Endothelial cell of umbilical vein (primary cell): ENCODE measurements at regions of chr11 and their contacts with region 1.

Region 1: DNA sequence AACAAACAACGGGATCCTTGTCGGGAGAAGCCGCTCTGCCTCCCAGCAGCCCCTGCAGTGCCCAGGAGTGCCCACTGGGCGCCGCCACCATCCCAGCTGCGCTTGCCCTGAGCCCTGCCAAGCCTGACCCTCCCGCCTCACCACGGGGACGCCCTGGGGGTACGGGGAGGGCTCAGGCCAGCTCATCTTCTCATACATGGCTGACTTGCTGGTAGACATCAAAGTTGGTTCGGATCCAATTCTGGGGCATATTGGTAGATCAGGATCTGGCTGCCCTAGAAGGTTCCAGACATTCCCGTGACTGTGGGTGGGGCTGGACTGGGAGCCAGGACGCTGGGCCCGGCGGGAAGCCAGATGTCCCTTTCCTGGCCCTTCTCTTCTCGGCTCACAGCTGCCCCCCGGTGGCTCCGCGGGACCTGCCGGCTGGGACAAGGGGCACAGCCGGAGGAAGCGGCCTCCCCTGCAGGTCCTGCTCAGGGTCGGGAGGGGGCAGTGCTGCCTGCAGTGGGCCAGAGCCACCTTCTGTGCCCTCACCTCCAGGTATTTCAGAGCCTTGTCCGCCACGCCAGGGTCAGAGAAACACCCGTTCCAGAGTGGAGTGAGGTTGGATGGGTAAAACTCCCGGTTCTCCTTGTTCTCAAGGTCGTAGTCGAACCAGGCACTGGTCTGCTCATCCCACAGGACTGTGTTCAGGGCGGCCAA is 10.6 kb upstream of the TREH start:
- DNase-seq: peak; percentile 90
- H3K4me3 ChIP-seq: peak overlapping the region in 2 of 3 experiments; percentile 22 to 34
- H3K27ac ChIP-seq: peak overlapping the region; percentile 48
- H3K4me1 ChIP-seq: no peaks in the 10 kb centered on the region
- H3K27me3 ChIP-seq: peaks cover 0 to 3% of the 10 kb centered on the region in 2 experiments
- CTCF ChIP-seq: peak; percentile 91 to 97
- POLR2A ChIP-seq: peak; percentile 58

Region 2: GRCh38 chr11:118592616-118593367 is 97.2 kb before region 1 on chr11:
- CTCF ChIA-PET with region 1: interaction called, 9 read pairs
- POLR2A ChIA-PET with region 1: no interaction called
- dilution Hi-C with region 1: no loop called
- intact Hi-C with region 1: loop called (anchors 1 kb)
- DNase-seq: no peak
- H3K4me3 ChIP-seq: no peak overlapping the region
- H3K27ac ChIP-seq: no peak overlapping the region
- H3K4me1 ChIP-seq: no peaks in the 10 kb centered on the region
- H3K27me3 ChIP-seq: no peaks in the 10 kb centered on the region
- CTCF ChIP-seq: no peak
- POLR2A ChIP-seq: no peak

Region 3: DNA sequence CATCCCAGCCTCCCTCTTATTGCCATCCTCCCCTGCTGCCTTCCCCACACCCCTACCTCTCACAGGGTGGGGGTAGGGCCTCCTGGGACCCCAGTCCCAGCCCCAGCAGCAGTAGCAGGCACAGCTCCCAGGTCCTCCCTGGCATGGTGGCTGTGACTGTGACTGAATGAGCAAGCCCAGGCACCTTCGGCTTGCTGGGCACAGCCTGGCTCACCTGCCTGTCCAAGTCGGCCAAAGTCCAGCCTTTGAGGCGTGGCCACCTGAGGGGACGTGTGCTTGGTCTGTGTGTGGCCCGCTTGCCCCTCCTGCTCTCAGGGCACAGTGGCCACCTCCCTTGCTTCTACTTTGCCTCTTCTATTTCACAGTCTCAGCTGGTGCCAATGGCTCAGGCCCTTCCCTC is 10.5 kb before region 1 on chr11 and contains the start of gene TREH:
- CTCF ChIA-PET with region 1: interaction called, 16 read pairs
- POLR2A ChIA-PET with region 1: no interaction called
- dilution Hi-C with region 1: no loop called
- intact Hi-C with region 1: no loop called
- DNase-seq: no peak
- H3K4me3 ChIP-seq: no peak within 1 kb of the TSS
- H3K27ac ChIP-seq: no peak within 1 kb of the TSS
- H3K4me1 ChIP-seq: no peaks in the 10 kb centered on the region
- H3K27me3 ChIP-seq: peaks cover 0 to under 1% of the 10 kb centered on the region in 2 experiments
- CTCF ChIP-seq: no peak
- POLR2A ChIP-seq: no peak
- total RNA-seq, gene TREH: not detected in 2 replicates

Region 4: DNA sequence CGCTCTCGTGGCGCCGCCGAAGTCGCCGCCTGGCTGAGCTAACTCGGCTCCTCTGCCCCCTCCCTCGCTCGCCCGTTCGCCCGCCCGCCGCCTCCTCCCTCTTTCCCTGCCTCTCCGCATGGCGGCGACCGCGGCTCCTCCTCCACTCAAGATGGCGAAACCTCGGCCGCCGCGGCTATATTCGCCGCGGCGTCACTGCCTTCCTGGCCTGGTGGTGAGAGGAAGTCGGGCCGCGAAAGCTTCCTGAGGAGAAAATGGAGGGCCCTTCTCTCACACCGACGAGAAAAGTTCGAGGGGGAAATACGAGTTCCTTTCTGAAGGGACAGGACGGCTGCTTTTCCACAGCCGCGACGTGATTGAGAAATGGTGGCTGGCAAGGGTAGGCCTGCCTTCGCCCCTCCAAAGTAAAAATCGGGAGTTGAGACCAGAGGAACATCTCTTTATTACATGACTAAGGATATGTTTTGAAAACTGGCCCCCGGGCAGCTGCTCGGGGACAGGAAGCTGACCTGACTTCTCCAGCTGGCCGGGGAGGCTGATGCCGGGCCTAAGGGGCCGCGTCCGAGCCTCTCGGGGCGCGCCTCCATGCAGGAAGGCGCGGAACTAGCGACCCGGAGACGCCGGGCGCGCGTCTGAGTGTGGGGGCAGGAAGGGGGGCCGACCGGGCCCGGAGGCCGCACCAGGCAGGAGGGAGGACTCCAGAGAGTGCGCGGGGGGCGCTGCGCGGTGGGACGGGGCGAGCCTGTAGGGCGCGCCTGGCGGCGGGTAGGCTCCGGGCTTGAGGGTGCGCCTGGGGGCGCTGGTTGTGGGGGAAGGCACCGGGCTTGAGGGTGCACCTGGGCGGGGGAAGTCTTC is 101.3 kb after region 1 on chr11 and contains the start of gene DDX6:
- CTCF ChIA-PET with region 1: interaction called, 11 read pairs
- POLR2A ChIA-PET with region 1: interaction called, 3 read pairs
- dilution Hi-C with region 1: no loop called
- intact Hi-C with region 1: no loop called
- DNase-seq: peak; percentile 86
- H3K4me3 ChIP-seq: peak within 1 kb of the TSS; percentile 70 to 87 (median 84)
- H3K27ac ChIP-seq: peak within 1 kb of the TSS; percentile 89
- H3K4me1 ChIP-seq: peaks cover 21% of the 10 kb centered on the region
- H3K27me3 ChIP-seq: no peaks in the 10 kb centered on the region
- CTCF ChIP-seq: peak; percentile 7 to 38
- POLR2A ChIP-seq: no peak
- total RNA-seq, gene DDX6: 132 and 138 TPM in 2 replicates

Region 5: DNA sequence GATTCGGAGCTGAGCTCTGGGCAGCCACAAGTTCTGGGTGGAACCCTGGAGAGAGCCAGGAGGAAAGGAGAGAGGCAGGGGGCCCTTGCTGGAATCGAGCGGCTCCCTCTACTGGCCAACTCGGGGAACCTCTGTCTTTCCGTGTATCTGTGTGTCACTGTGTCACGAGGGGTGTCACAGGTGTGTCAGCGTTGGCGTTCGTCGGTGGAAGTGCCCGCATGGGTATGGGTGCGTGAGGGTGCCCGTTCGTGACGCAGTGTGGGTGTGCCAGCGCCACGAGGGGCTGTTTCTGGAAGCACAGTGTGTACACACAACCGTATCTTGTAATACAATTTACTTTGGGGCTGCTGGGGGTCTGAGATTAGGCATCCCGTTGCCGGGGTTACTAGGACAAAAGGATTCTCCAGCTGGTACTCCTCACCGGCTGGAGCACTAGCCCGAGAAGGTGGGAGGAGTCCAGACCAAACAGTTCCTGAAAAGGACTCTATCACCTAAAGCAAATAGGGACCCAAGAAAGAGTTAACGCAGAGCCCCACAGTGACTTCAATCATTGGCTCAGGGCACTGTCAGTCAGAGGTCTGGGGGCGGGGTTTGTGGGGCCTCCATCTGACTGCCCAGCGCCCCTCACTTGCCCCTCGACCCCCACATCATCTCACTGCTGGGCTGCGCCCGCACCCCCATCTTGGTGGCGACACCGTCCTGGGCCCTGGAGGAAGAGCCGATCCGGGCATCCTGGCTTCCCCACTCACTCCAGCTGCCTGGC is 238.3 kb after region 1 on chr11:
- CTCF ChIA-PET with region 1: interaction called, 14 read pairs
- POLR2A ChIA-PET with region 1: no interaction called
- dilution Hi-C with region 1: no loop called
- intact Hi-C with region 1: loop called (anchors 1 kb)
- DNase-seq: peak; percentile 91
- H3K4me3 ChIP-seq: peak overlapping the region; percentile 34 to 77 (median 64)
- H3K27ac ChIP-seq: peak overlapping the region; percentile 27
- H3K4me1 ChIP-seq: peaks cover 21% of the 10 kb centered on the region
- H3K27me3 ChIP-seq: peaks cover 0 to 2% of the 10 kb centered on the region in 2 experiments
- CTCF ChIP-seq: peak; percentile 89 to 92
- POLR2A ChIP-seq: no peak

Region 6: GRCh38 chr11:119205574-119206510 is 515.8 kb after region 1 on chr11 and contains the start of gene CBL:
- CTCF ChIA-PET with region 1: no interaction called
- POLR2A ChIA-PET with region 1: no interaction called
- dilution Hi-C with region 1: no loop called
- intact Hi-C with region 1: no loop called
- DNase-seq: peak; percentile 90
- H3K4me3 ChIP-seq: peak within 1 kb of the TSS; percentile 88 to 97 (median 93)
- H3K27ac ChIP-seq: peak within 1 kb of the TSS; percentile 55
- H3K4me1 ChIP-seq: peaks cover 17% of the 10 kb centered on the region
- H3K27me3 ChIP-seq: no peaks in the 10 kb centered on the region
- CTCF ChIP-seq: peak; percentile 81 to 95
- POLR2A ChIP-seq: peak; percentile 35
- total RNA-seq, gene CBL: 40.1 and 41.5 TPM in 2 replicates